HCT116 (cell line): ENCODE measurements at regions of chrX and their contacts with region 1.

Region 1: DNA sequence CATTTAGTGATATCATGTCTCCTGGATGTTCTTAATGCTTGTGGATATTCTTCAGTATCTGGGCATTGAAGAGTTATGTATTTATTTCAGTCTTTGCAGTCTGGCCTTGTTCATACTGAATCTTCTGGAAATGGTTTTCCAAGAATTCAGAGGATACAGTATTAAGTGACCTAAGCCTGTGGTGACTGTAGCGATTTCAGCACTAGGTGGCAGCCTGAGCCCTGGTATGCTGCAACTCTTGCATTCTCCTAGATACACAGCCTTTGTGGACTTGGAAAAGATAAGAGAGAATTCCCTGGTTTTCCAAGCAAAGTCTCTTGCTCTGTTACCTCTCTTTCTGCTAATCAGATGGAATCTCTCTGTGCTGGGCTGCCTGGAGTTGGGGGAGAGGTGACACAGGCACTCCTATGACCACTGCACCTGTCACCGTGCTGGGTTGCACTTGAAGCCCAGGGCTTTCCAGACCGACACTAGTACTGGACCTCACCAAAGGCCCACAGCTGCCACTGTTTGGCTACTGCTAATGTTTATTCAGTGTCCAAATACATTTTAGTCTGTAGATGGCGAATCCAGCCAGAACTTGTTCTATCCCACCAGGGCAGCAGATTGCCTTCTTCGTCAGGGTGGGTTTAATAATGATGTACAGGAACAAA is 19.3 kb upstream of the SPIN2A start:
- DNase-seq: peak; percentile 13
- ATAC-seq: peak; percentile 79
- H3K4me3 ChIP-seq: no peak overlapping the region
- H3K27ac ChIP-seq: no peak overlapping the region
- H3K4me1 ChIP-seq: peaks cover 0 to 6% of the 10 kb centered on the region in 2 experiments; a peak in 1 of 4 replicates
- H3K27me3 ChIP-seq: no peaks in the 10 kb centered on the region
- CTCF ChIP-seq: peak; percentile 18 to 47 (median 39); a peak in 5 of 6 replicates
- POLR2A ChIP-seq: no peak
- RAD21 ChIP-seq: peak; percentile 59

Region 2: GRCh38 chrX:56600141-56600540 is 556.4 kb before region 1 on chrX:
- CTCF ChIA-PET with region 1: no interaction called
- POLR2A ChIA-PET with region 1: no interaction called
- RAD21 ChIA-PET with region 1: no interaction called
- intact Hi-C with region 1: no loop called
- DNase-seq: no peak
- ATAC-seq: no peak
- H3K4me3 ChIP-seq: no peak overlapping the region
- H3K27ac ChIP-seq: no peak overlapping the region
- H3K4me1 ChIP-seq: no peaks in the 10 kb centered on the region
- H3K27me3 ChIP-seq: no peaks in the 10 kb centered on the region
- CTCF ChIP-seq: no peak
- POLR2A ChIP-seq: no peak
- RAD21 ChIP-seq: no peak

Region 3: DNA sequence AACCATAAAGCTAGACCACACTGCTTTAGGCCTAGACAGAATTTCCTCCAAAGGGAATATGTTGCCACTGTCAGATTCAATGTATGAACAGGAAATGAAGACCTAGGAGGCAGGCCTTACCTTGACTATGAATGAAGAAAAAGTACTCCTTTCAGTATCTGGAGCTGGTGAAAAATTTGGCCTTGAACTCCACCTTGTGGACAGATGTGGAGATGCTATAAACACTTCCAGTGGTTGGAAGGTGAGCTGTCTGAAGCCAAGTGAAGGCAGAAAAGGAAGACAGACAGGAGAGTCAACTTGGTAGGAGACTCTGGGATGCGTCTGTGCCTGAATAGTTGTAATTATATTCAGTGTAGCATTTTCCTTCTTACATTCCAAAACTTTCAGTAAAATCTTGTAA is 178.4 kb before region 1 on chrX:
- CTCF ChIA-PET with region 1: no interaction called
- POLR2A ChIA-PET with region 1: no interaction called
- RAD21 ChIA-PET with region 1: no interaction called
- intact Hi-C with region 1: no loop called
- DNase-seq: peak; percentile 15
- ATAC-seq: peak; percentile 74
- H3K4me3 ChIP-seq: no peak overlapping the region
- H3K27ac ChIP-seq: no peak overlapping the region
- H3K4me1 ChIP-seq: no peaks in the 10 kb centered on the region
- H3K27me3 ChIP-seq: no peaks in the 10 kb centered on the region
- CTCF ChIP-seq: peak; percentile 44 to 61 (median 49); a peak in 5 of 6 replicates
- POLR2A ChIP-seq: no peak
- RAD21 ChIP-seq: peak; percentile 73

Region 4: GRCh38 chrX:57453901-57454300 is 297.4 kb after region 1 on chrX:
- CTCF ChIA-PET with region 1: no interaction called
- POLR2A ChIA-PET with region 1: no interaction called
- RAD21 ChIA-PET with region 1: no interaction called
- intact Hi-C with region 1: loop called (anchors 2 kb)
- DNase-seq: no peak
- ATAC-seq: peak; percentile 76
- H3K4me3 ChIP-seq: no peak overlapping the region
- H3K27ac ChIP-seq: no peak overlapping the region
- H3K4me1 ChIP-seq: no peaks in the 10 kb centered on the region
- H3K27me3 ChIP-seq: no peaks in the 10 kb centered on the region
- CTCF ChIP-seq: peak; percentile 36 to 61 (median 56); a peak in 5 of 6 replicates
- POLR2A ChIP-seq: no peak
- RAD21 ChIP-seq: peak; percentile 57